Activated CD8-positive, alpha-beta T cell treated with anti-CD3 and anti-CD28 coated beads, Interleukin-2, amount 10 ng/mL, durations not matched to agents 7 days and 5 days (primary cell): ENCODE measurements at regions of chr10 and their contacts with region 1.

Region 1: DNA sequence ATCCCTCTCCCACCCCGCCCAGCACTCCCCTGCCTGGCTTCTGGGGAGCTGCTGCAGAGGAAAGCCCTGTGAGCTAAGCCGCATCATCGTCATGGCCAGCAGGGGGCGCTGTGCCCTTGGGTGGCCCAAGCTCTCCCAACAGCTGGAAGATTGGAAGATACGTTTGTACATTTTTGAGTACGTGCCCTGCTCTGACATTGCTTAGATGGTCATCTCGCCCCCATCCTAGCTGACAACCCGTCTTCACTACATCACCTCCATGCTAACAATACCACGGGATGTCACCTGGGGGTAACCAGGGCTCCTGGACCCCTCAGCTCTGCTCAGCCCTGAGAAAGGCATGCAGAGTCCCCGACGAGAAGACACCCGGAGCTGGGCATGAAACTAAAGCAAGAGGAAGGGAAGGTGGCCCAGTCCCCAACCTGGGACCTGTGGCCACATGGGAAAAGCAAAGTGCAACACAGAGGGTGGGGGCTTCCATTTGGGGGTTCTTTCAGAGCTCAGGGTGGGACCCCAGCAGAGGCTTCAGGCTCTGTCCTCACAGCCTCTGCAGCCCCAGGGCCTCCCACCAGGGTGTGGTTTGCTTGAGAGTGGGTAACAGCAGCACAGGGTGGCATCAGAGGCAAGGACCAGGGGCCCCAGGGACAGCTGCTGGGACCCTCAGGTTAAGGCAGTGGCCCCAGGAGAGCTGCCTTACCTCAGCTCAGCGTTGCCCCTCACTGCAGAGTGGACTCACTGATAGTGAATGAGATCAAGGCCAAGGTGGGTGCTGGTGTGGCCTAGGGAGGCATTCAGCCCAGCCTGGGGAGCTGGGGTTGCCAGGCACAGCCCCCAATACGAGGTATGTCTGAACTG is 136.7 kb downstream of the PTPN20 start:
- DNase-seq: peak; percentile 80
- ATAC-seq: peak; percentile 85
- H3K4me3 Mint-ChIP-seq: no peak overlapping the region
- H3K27ac Mint-ChIP-seq: peak overlapping the region; percentile 67
- H3K4me1 Mint-ChIP-seq: peaks cover 13% of the 10 kb centered on the region
- H3K27me3 Mint-ChIP-seq: no peaks in the 10 kb centered on the region

Region 2: DNA sequence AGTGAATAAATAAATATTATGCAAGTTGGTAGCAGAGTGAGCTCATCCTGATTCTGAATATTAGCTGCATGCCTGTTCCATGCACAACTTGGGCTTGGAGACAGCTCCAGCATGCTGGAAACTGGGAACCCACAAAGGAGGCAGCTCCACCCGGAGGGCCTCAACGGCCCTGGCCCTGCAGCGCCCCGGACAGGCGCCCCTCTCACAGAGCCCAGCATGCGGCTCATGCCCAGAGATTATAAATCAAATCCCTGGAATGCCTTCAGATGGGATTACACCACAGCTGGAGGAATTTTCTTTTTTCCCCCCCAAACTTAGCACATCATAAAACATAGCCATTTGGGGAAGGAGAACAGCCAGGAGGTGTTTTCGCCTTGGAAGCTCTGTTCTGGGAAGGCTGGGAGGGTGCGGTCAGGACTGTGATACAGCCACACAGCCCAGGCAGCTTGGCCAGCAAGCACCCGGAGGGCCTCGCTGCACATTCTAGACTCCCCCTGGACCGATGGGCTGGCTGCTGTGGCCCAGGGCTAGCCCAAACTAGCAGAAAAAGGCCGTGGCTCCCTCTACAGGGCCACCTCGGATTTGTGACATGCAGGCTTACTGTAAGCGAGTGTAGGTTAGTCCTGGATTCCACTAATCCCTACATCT is 34.3 kb before region 1 on chr10:
- CTCF ChIA-PET with region 1: no interaction called
- POLR2A ChIA-PET with region 1: no interaction called
- DNase-seq: peak; percentile 9
- ATAC-seq: no peak
- H3K4me3 Mint-ChIP-seq: no peak overlapping the region
- H3K27ac Mint-ChIP-seq: no peak overlapping the region
- H3K4me1 Mint-ChIP-seq: no peaks in the 10 kb centered on the region
- H3K27me3 Mint-ChIP-seq: peaks cover 23% of the 10 kb centered on the region

Region 3: DNA sequence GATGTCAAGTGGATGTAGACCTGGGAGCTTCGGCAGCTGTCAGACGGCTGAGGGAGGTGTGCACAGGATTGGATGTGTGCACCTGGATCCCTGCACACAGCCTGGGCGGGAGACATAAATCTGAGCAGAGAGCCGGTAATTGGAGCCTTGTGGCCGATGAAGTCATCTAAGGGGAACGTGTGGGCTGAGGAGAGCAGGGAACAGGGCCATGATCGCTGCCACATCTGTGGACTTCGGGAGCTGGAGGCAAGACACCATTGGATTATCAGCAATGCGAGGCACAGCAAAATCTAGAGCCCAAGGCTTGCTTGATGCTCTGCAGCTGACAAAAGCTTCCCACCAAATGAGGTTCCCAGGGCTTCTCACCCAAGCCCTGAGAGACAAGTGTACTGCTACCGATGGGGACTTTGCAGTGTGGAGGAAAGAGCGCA is 11.1 kb after region 1 on chr10:
- CTCF ChIA-PET with region 1: interaction called, 13 read pairs
- POLR2A ChIA-PET with region 1: no interaction called
- DNase-seq: no peak
- ATAC-seq: no peak
- H3K4me3 Mint-ChIP-seq: no peak overlapping the region
- H3K27ac Mint-ChIP-seq: no peak overlapping the region
- H3K4me1 Mint-ChIP-seq: peaks cover 8% of the 10 kb centered on the region
- H3K27me3 Mint-ChIP-seq: peaks cover 2% of the 10 kb centered on the region

Region 4: GRCh38 chr10:47225219-47225927 is 177.5 kb after region 1 on chr10:
- CTCF ChIA-PET with region 1: interaction called, 13 read pairs
- POLR2A ChIA-PET with region 1: no interaction called
- DNase-seq: no peak
- ATAC-seq: no peak
- H3K4me3 Mint-ChIP-seq: no peak overlapping the region
- H3K27ac Mint-ChIP-seq: peak overlapping the region; percentile 3
- H3K4me1 Mint-ChIP-seq: peaks cover 3% of the 10 kb centered on the region
- H3K27me3 Mint-ChIP-seq: no peaks in the 10 kb centered on the region

Region 5: DNA sequence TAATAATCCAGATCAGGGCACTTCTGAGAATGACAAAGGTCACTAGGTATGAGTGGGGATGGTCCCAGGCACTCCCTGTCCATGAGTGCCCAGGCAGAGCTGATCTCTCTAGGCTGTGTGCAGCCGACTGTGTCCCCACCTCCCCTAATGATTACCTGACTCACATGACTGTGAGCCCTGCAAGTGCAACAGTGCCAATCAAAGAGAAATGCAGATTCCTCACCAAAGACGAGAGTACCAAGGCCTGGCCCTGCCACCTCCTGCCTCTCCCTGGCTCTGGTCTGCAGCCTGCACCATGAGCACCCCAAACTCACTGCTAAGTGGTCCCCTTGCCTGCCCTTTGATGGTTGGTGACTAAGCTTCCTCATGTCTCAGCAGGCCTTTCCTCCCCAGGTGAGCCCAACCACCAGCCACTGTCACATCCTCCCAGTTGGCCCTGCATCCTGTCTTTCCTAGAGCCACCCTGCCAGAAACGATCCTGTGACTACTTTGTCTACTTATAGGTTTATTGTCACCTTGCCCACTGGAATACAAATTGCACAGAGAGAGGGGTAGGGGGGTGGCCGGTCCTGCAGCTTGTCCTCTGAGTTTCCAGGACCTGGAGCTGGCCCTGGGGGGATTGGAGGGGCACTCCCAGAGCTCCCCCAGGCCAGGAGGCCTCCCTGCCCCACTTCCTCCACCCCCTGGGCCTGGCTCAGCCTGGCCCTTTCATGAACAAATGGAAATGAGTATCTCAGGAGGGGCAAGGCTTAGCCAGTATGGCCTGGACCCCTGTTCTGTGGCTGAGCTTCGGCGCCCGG is 229.7 kb after region 1 on chr10:
- CTCF ChIA-PET with region 1: interaction called, 21 read pairs
- POLR2A ChIA-PET with region 1: interaction called, 3 read pairs
- DNase-seq: peak; percentile 82
- ATAC-seq: peak; percentile 97
- H3K4me3 Mint-ChIP-seq: peak overlapping the region; percentile 48
- H3K27ac Mint-ChIP-seq: peak overlapping the region; percentile 90
- H3K4me1 Mint-ChIP-seq: peaks cover 50% of the 10 kb centered on the region
- H3K27me3 Mint-ChIP-seq: no peaks in the 10 kb centered on the region

Region 6: DNA sequence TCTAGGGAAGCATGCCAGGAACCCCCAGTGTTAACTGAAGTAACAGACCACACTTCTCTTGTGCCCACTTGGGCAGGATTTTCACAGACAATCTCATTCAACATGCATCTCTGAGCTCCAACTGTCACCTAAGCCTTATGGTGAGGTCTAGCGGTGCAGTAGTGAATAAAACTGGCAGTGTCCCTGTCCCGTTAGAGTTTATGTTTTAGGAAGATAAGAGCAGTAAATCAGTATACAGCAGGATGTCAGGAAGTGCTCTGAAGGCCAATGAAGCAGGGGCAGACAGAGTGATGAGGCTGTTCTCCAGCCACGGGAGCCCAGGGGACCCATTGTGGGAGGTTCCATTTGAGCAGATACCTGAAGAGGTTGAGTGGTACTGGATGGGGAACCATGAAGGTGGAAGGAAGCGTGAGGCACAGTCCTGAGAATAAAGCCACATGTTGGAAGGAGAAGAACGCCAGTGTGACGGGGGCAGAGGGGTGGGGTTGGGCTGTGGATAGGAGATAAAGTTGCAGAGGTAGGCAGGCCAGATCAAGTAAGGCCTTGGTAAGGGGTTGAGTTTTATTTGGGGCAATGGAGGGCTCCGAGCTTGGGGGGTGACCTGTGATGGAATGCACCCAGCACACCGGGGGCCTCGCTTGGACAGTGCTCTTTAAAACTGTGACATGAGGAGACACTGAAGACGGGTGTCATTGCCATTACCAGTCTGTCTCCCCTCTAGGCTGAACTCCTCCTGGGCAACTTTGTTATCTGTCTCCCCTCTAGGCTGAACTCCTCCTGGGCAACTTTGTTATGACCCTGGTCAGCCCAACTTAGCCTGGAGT is 258.7 kb after region 1 on chr10:
- CTCF ChIA-PET with region 1: interaction called, 238 read pairs
- POLR2A ChIA-PET with region 1: interaction called, 14 read pairs
- DNase-seq: no peak
- ATAC-seq: no peak
- H3K4me3 Mint-ChIP-seq: no peak overlapping the region
- H3K27ac Mint-ChIP-seq: no peak overlapping the region
- H3K4me1 Mint-ChIP-seq: peaks cover 11% of the 10 kb centered on the region
- H3K27me3 Mint-ChIP-seq: peaks cover 7% of the 10 kb centered on the region

Region 7: DNA sequence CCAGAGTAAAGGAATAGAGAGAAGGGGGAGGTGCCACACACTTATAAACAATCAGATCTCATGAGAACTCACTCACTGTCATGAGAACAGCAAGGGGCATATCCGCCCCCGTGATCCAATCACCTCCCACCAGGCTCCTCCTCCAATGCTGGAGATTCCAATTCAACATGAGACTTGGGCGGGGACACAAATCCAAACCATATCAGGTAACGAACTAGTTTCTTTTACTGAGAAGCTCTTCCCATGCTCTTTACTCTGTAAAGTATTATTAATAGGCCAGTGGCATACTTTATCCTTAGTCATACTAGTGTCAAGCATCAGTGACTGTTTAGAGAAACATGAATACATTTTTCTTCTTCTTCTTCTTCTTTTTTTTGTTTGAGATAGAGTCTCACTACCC is 375.6 kb after region 1 on chr10:
- CTCF ChIA-PET with region 1: no interaction called
- POLR2A ChIA-PET with region 1: no interaction called
- DNase-seq: no peak
- ATAC-seq: no peak
- H3K4me3 Mint-ChIP-seq: no peak overlapping the region
- H3K27ac Mint-ChIP-seq: no peak overlapping the region
- H3K4me1 Mint-ChIP-seq: no peaks in the 10 kb centered on the region
- H3K27me3 Mint-ChIP-seq: peaks cover 6% of the 10 kb centered on the region